ENCODE measurements at regions of chr12 and their contacts with region 1.

Region 1: DNA sequence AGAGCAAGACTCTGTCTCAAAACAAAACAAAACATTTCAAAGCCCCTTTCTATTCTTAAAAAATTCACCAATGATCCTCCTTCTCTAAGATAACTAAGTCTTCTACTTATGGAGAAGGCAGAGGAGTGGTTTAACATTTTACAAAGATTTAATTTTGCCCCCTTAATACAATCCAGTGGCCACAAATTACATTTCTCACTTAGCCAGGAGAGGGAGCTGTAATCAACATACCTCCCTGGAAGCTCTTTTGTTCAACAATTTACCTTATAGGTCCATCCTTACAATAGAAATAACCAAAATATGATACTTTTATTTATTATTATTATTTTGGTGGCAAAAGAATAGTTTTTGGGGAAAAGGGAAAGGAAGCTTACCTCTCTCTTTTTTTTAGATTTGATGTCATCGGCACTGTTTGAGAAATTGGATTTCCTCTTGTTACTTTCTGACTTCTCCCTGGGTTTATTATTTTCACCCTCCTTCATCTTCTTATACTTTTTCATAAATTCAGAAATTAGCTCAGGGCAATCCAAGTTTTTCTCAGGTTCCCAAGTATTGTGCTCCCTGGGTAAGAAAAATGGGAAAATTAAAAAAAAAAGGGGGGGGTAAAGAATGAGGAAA is 28.1 kb downstream of the CBX5 start:
- DNase-seq: peak; percentile 67
- H3K4me3 ChIP-seq: no peak overlapping the region
- H3K27ac ChIP-seq: no peak overlapping the region
- H3K4me1 ChIP-seq: no peaks in the 10 kb centered on the region
- H3K27me3 ChIP-seq: no peaks in the 10 kb centered on the region
- CTCF ChIP-seq: peak; percentile 43 to 46
- POLR2A ChIP-seq: no peak

Region 2: GRCh38 chr12:54053751-54054741 is 197.7 kb before region 1 on chr12 and contains the start of gene HOXC4:
- CTCF ChIA-PET with region 1: no interaction called
- POLR2A ChIA-PET with region 1: no interaction called
- dilution Hi-C with region 1: no loop called
- intact Hi-C with region 1: no loop called
- DNase-seq: peak; percentile 4
- H3K4me3 ChIP-seq: no peak within 1 kb of the TSS
- H3K27ac ChIP-seq: no peak within 1 kb of the TSS
- H3K4me1 ChIP-seq: no peaks in the 10 kb centered on the region
- H3K27me3 ChIP-seq: peaks cover 79 to 90% of the 10 kb centered on the region in 2 experiments
- CTCF ChIP-seq: no peak
- POLR2A ChIP-seq: no peak
- total RNA-seq, gene HOXC4: 0.58 TPM in 1 of 2 replicates, not detected in the other

Region 3: GRCh38 chr12:54082397-54082892 is 169.3 kb before region 1 on chr12:
- CTCF ChIA-PET with region 1: no interaction called
- POLR2A ChIA-PET with region 1: no interaction called
- dilution Hi-C with region 1: no loop called
- intact Hi-C with region 1: no loop called
- DNase-seq: no peak
- H3K4me3 ChIP-seq: no peak overlapping the region
- H3K27ac ChIP-seq: no peak overlapping the region
- H3K4me1 ChIP-seq: no peaks in the 10 kb centered on the region
- H3K27me3 ChIP-seq: peaks cover 28 to 29% of the 10 kb centered on the region in 2 experiments
- CTCF ChIP-seq: no peak
- POLR2A ChIP-seq: no peak

Region 4: DNA sequence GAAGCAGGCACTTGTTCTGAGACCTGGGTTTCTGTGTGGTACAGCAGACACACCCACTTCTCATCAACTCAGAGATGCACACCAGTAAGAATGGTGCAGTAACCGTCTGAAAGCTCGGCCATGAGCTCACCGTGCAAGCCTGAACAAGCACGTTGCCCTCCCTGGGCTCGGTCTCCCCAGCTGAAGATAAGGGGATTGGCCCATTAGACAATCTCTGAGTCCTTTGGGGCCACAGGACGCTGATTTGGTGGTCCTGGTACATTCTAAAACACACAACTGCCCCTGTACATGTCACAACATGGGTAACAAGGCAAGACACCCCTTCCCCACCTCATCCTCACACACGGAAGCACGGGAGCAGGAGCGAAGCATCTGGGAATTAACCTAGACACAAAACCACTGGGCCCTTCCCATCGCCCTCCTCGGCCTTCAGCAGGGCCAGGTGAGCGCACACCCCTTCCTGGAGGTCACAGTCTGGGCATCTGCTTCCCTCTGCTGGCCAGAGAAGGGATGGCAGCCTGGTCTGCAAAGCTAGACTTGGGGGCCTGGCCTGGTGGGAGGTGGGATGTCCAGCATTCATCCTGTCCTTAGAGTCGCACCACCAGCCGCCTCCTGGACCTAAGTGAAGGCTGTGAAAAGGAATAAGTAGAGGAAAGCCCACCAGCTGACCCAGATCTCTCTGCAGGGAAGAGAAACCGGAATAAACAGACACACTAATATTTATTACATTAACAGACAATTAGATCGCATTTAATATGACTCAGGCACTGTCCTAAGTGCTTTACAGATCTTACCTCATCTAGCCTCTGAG is 44.1 kb before region 1 on chr12:
- CTCF ChIA-PET with region 1: no interaction called
- POLR2A ChIA-PET with region 1: no interaction called
- dilution Hi-C with region 1: no loop called
- intact Hi-C with region 1: no loop called
- DNase-seq: peak; percentile 49
- H3K4me3 ChIP-seq: no peak overlapping the region
- H3K27ac ChIP-seq: no peak overlapping the region
- H3K4me1 ChIP-seq: no peaks in the 10 kb centered on the region
- H3K27me3 ChIP-seq: peaks cover 17 to 35% of the 10 kb centered on the region in 2 experiments
- CTCF ChIP-seq: peak; percentile 79 to 93
- POLR2A ChIP-seq: no peak

Region 5: GRCh38 chr12:54220092-54220557 is 31.7 kb before region 1 on chr12:
- CTCF ChIA-PET with region 1: interaction called, 10 read pairs
- POLR2A ChIA-PET with region 1: no interaction called
- dilution Hi-C with region 1: no loop called
- intact Hi-C with region 1: no loop called
- DNase-seq: peak; percentile 76
- H3K4me3 ChIP-seq: no peak overlapping the region
- H3K27ac ChIP-seq: no peak overlapping the region
- H3K4me1 ChIP-seq: peaks cover 14% of the 10 kb centered on the region
- H3K27me3 ChIP-seq: peaks cover 2 to 5% of the 10 kb centered on the region in 2 experiments
- CTCF ChIP-seq: peak; percentile 77 to 85
- POLR2A ChIP-seq: no peak

Region 6: DNA sequence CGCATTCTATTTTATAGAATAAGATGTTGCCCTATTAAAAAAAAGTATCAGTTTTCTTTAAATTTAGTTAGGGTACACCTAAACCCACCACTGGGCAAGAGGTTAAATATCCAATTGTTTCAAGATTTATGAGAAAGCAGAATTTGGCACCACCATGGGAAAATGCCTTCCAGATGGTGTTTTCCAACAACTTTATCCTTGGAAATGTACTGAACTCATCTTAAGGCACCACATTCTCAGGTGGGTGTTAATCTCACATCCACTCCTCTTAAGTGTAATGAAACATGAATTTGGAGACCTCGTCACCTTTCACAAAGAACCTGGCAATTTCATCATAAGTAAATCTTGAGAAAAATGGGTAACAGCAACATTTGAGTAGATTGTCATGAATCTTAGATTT is 15.1 kb after region 1 on chr12:
- CTCF ChIA-PET with region 1: interaction called, 41 read pairs
- POLR2A ChIA-PET with region 1: no interaction called
- dilution Hi-C with region 1: no loop called
- intact Hi-C with region 1: no loop called
- DNase-seq: no peak
- H3K4me3 ChIP-seq: no peak overlapping the region
- H3K27ac ChIP-seq: no peak overlapping the region
- H3K4me1 ChIP-seq: peaks cover 11% of the 10 kb centered on the region
- H3K27me3 ChIP-seq: no peaks in the 10 kb centered on the region
- CTCF ChIP-seq: no peak
- POLR2A ChIP-seq: no peak

Region 7: DNA sequence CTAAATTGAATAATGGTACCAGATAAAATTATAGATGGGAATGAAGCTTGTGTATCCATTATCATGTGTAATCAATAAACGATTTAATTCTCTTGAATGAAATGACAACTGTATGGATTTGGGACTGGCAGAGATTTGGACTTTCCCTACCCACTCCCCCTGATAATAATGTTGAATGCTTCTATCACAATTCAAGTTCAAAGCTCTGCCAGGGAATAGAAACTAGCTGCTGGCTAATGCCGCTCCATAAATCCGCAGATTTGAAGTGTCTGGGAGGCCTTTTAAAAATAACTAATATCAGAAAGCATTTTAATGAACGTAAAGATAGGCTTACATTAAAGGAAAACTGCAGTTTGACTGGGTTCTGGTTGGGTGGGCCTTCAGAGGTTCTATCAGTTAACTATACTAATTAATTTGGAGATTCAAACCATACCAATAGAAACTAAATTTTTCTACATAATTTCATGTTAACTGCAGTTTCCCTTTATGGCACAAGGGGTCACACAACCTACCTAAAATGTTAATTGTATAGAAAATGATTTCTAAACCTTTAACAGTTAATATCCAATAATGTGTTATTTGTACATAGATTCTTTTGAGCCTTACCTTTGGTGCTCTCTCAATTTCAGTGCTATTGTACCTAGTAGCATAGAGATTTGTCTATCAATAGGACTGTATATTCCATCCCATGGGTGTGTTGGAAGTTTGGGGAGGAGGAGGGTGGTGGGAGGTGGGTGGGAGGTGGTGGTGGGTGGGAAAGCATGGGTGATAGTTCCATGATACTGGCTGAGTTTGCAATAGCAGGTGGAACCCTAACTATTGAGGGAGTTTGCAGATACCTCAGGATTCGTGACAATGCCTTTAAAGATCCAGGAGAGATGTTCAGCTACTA is 33.6 kb after region 1 on chr12:
- CTCF ChIA-PET with region 1: interaction called, 39 read pairs
- POLR2A ChIA-PET with region 1: interaction called, 29 read pairs
- dilution Hi-C with region 1: no loop called
- intact Hi-C with region 1: no loop called
- DNase-seq: no peak
- H3K4me3 ChIP-seq: peak overlapping the region in 1 of 3 experiments; percentile 19
- H3K27ac ChIP-seq: no peak overlapping the region
- H3K4me1 ChIP-seq: peaks cover 31% of the 10 kb centered on the region
- H3K27me3 ChIP-seq: no peaks in the 10 kb centered on the region
- CTCF ChIP-seq: peak; percentile 3 to 11
- POLR2A ChIP-seq: no peak

Region 8: GRCh38 chr12:54300732-54301427 is 49.1 kb after region 1 on chr12 and contains the start of gene NFE2:
- CTCF ChIA-PET with region 1: interaction called, 18 read pairs
- POLR2A ChIA-PET with region 1: no interaction called
- dilution Hi-C with region 1: no loop called
- intact Hi-C with region 1: no loop called
- DNase-seq: no peak
- H3K4me3 ChIP-seq: no peak within 1 kb of the TSS
- H3K27ac ChIP-seq: no peak within 1 kb of the TSS
- H3K4me1 ChIP-seq: no peaks in the 10 kb centered on the region
- H3K27me3 ChIP-seq: peaks cover 38 to 54% of the 10 kb centered on the region in 2 experiments
- CTCF ChIP-seq: peak in 1 of 2 donors; percentile 1
- POLR2A ChIP-seq: no peak
- total RNA-seq, gene NFE2: not detected in 2 replicates

Region 9: GRCh38 chr12:54337280-54337842 is 85.6 kb after region 1 on chr12:
- CTCF ChIA-PET with region 1: interaction called, 33 read pairs
- POLR2A ChIA-PET with region 1: no interaction called
- dilution Hi-C with region 1: no loop called
- intact Hi-C with region 1: no loop called
- DNase-seq: no peak
- H3K4me3 ChIP-seq: no peak overlapping the region
- H3K27ac ChIP-seq: no peak overlapping the region
- H3K4me1 ChIP-seq: no peaks in the 10 kb centered on the region
- H3K27me3 ChIP-seq: no peaks in the 10 kb centered on the region
- CTCF ChIP-seq: no peak
- POLR2A ChIP-seq: no peak

Region 10: DNA sequence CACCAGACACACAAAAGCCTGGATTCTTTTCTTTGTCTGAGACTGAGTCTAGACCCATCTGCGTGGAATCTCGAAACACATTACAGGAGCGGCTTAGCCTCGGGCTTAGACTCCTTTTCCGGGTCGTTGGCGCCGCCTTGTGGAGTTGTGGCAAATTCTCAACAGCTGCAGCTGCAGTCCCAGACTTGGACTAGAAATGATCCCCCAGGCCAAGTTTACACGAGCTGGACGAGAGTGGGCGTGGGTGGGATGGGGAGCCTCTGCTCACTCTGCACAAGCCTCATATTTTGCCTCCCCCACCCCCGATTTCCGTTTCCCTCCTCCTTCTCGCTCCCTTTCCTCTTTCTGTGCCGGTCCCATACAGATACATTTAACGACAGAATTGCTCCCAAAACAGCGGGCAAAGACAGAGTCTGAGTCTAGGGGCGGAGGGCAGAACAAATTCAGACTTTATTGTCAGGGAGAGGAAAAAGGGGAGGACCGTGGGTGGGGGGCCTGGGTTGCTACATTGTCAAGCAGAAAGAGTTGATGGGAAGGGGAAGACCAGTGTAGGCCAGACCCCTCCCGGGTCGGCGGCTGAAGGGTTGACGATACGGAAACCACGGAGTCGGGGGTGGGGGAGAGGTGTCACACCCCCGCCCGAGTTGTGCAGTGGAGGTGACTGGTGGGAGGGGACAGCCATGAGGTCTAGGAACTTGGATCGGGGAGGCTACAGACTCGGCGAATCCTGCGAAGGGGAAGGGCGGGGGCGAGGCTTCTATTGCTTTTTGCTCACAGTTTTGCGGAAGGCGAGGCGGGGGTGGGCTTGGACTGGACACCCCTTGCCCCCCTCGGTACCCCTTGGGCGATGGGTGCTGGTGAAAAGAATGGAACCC is 117.2 kb after region 1 on chr12:
- CTCF ChIA-PET with region 1: interaction called, 14 read pairs
- POLR2A ChIA-PET with region 1: no interaction called
- dilution Hi-C with region 1: no loop called
- intact Hi-C with region 1: loop called (anchors 1 kb)
- DNase-seq: peak; percentile 85
- H3K4me3 ChIP-seq: peak overlapping the region; percentile 6 to 39 (median 23)
- H3K27ac ChIP-seq: no peak overlapping the region
- H3K4me1 ChIP-seq: peaks cover 33% of the 10 kb centered on the region
- H3K27me3 ChIP-seq: no peaks in the 10 kb centered on the region
- CTCF ChIP-seq: peak; percentile 91 to 92
- POLR2A ChIP-seq: no peak

Measured in endothelial cell of umbilical vein (primary cell).